Mammary epithelial cell (primary cell): ENCODE measurements at regions of chr11 and their contacts with region 1.

Region 1: GRCh38 chr11:44538375-44539054 is 26.9 kb upstream of the CD82 start:
- DNase-seq: peak; percentile 49
- H3K4me3 ChIP-seq: no peak overlapping the region
- H3K27ac ChIP-seq: no peak overlapping the region
- H3K4me1 ChIP-seq: no peaks in the 10 kb centered on the region
- H3K27me3 ChIP-seq: no peaks in the 10 kb centered on the region
- CTCF ChIP-seq: peak; percentile 90 to 92

Region 2: GRCh38 chr11:44120169-44120568 is 418.3 kb before region 1 on chr11:
- CTCF ChIA-PET with region 1: no interaction called
- dilution Hi-C with region 1: loop called (anchors 5 kb)
- in situ Hi-C with region 1: loop called in 1 of 2 experiments (anchors 25 kb)
- intact Hi-C with region 1: no loop called
- DNase-seq: no peak
- H3K4me3 ChIP-seq: no peak overlapping the region
- H3K27ac ChIP-seq: no peak overlapping the region
- H3K4me1 ChIP-seq: no peaks in the 10 kb centered on the region
- H3K27me3 ChIP-seq: no peaks in the 10 kb centered on the region
- CTCF ChIP-seq: peak; percentile 45 to 64

Region 3: GRCh38 chr11:44133335-44133946 is 405.1 kb before region 1 on chr11:
- CTCF ChIA-PET with region 1: no interaction called
- dilution Hi-C with region 1: no loop called
- in situ Hi-C with region 1: loop called in 1 of 2 experiments (anchors 25 kb)
- intact Hi-C with region 1: loop called (anchors 1 kb)
- DNase-seq: no peak
- H3K4me3 ChIP-seq: no peak overlapping the region
- H3K27ac ChIP-seq: no peak overlapping the region
- H3K4me1 ChIP-seq: peaks cover 4% of the 10 kb centered on the region
- H3K27me3 ChIP-seq: no peaks in the 10 kb centered on the region
- CTCF ChIP-seq: peak; percentile 65 to 66

Region 4: GRCh38 chr11:44596525-44597276 is 58.2 kb after region 1 on chr11:
- CTCF ChIA-PET with region 1: no interaction called
- dilution Hi-C with region 1: no loop called
- in situ Hi-C with region 1: no loop called
- intact Hi-C with region 1: no loop called
- DNase-seq: peak; percentile 28
- H3K4me3 ChIP-seq: no peak overlapping the region
- H3K27ac ChIP-seq: no peak overlapping the region
- H3K4me1 ChIP-seq: peaks cover 21% of the 10 kb centered on the region
- H3K27me3 ChIP-seq: no peaks in the 10 kb centered on the region
- CTCF ChIP-seq: no peak

Region 5: DNA sequence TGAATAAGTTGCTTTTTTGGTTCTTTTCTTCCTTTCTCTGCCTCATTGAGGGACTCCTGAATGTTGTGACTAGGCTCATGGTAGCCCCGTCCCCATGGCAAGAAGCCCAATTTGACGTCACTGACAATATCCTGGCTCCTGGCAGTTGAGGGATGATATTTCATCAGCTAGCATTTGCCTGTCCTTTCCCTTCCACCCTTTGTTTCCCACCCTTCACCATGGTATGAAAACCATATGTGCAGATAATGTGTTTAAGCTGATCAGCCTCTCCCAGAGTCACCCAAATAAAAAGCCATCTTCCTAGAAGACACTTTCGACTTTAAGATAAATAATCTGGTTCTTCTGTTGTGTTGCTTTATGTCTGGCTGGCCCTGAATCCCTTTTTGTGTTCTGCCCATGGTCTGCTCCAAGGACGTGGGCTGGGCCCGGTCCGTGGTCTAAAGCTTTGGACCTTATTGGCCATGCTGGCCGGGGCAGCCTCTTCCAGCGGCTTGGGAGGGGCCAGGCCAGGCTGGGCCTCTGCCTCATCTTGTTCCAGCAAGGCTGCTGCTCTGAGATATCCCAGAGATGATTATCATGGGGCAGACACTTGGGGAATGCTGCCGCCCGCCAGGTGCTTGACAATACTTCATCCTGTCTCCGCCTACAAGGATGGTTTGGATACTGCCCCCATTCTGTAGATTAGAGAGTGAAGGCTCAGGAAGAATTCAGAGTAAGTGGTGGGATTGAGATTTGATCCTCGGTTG is 193.3 kb after region 1 on chr11:
- CTCF ChIA-PET with region 1: no interaction called
- dilution Hi-C with region 1: no loop called
- in situ Hi-C with region 1: no loop called
- intact Hi-C with region 1: no loop called
- DNase-seq: no peak
- H3K4me3 ChIP-seq: no peak overlapping the region
- H3K27ac ChIP-seq: no peak overlapping the region
- H3K4me1 ChIP-seq: peaks cover 8% of the 10 kb centered on the region
- H3K27me3 ChIP-seq: peaks cover 4% of the 10 kb centered on the region
- CTCF ChIP-seq: no peak